ENCODE measurements at regions of chrX and their contacts with region 1.

Region 1: DNA sequence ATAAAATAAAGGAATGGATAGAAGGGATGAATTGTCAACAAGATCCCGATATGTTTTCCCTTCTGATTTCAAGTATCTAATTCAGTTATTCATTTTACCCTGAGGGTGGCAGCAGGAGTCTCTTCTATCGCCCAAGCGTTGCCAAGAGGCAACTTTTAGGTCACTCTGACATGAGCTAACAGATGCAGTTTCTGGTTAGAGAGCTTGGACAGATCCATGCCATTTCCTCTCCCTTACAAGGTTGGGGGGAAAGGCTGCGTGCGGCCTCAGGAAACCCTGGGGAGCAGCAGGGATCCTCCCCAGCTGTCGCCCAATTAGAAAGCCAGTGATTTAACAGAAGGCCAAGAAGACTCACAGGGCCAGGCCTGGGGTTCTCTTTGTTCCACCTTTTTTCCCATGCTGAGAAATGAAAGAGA is 35.3 kb upstream of the WAS start:
- DNase-seq: peak; percentile 60
- ATAC-seq: peak; percentile 73
- H3K4me3 ChIP-seq: no peak overlapping the region
- H3K4me3 Mint-ChIP-seq: no peak overlapping the region
- H3K27ac ChIP-seq: no peak overlapping the region
- H3K27ac Mint-ChIP-seq: peak overlapping the region; percentile 70
- H3K4me1 ChIP-seq: no peaks in the 10 kb centered on the region
- H3K4me1 Mint-ChIP-seq: no peaks in the 10 kb centered on the region
- H3K27me3 ChIP-seq: no peaks in the 10 kb centered on the region
- H3K27me3 Mint-ChIP-seq: no peaks in the 10 kb centered on the region
- CTCF ChIP-seq: peak; percentile 65

Region 2: GRCh38 chrX:48598614-48599013 is 49.7 kb before region 1 on chrX:
- CTCF ChIA-PET with region 1: no interaction called
- POLR2A ChIA-PET with region 1: no interaction called
- intact Hi-C with region 1: no loop called
- DNase-seq: no peak
- ATAC-seq: no peak
- H3K4me3 ChIP-seq: no peak overlapping the region
- H3K4me3 Mint-ChIP-seq: peak overlapping the region; percentile 98
- H3K27ac ChIP-seq: no peak overlapping the region
- H3K27ac Mint-ChIP-seq: no peak overlapping the region
- H3K4me1 ChIP-seq: peaks cover 0 to 12% of the 10 kb centered on the region in 2 donors
- H3K4me1 Mint-ChIP-seq: peaks cover 8% of the 10 kb centered on the region
- H3K27me3 ChIP-seq: no peaks in the 10 kb centered on the region
- H3K27me3 Mint-ChIP-seq: no peaks in the 10 kb centered on the region
- CTCF ChIP-seq: no peak

Region 3: DNA sequence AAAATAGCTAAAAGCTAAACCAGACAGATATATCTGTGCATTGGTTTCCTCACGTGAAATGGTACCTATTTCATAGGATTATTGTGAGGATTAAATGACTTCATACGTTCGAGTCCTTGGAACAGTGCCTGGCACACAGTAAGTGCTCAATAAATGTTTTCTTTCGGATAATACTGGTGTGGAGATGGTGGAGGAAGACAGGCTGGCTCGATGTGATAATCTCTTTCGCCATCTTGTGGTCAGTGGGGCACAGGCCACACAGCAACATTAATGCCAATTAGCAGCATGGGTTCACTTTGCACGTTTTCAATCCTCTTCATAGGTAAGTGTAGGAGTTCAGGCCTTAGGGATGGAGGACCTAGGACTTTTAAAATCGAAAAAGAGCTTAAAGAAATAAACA is 1190.0 kb after region 1 on chrX:
- CTCF ChIA-PET with region 1: interaction called, 3 read pairs
- POLR2A ChIA-PET with region 1: no interaction called
- intact Hi-C with region 1: loop called (anchors 5 kb)
- DNase-seq: peak; percentile 27
- ATAC-seq: no peak
- H3K4me3 ChIP-seq: no peak overlapping the region
- H3K4me3 Mint-ChIP-seq: no peak overlapping the region
- H3K27ac ChIP-seq: no peak overlapping the region
- H3K27ac Mint-ChIP-seq: no peak overlapping the region
- H3K4me1 ChIP-seq: no peaks in the 10 kb centered on the region
- H3K4me1 Mint-ChIP-seq: no peaks in the 10 kb centered on the region
- H3K27me3 ChIP-seq: peaks cover 0 to 5% (median 0%) of the 10 kb centered on the region in 4 experiments
- H3K27me3 Mint-ChIP-seq: no peaks in the 10 kb centered on the region
- CTCF ChIP-seq: peak; percentile 30